Heart left ventricle (tissue), 16 donors: ENCODE measurements at regions of chr12 and their contacts with region 1.

Region 1: GRCh38 chr12:38332814-38333213 is 16.2 kb downstream of the ALG10B start:
- DNase-seq: no peak
- ATAC-seq: no peak
- H3K4me3 ChIP-seq: no peak overlapping the region
- H3K27ac ChIP-seq: no peak overlapping the region
- H3K4me1 ChIP-seq: no peaks in the 10 kb centered on the region
- H3K27me3 ChIP-seq: no peaks in the 10 kb centered on the region
- CTCF ChIP-seq: no peak
- POLR2A ChIP-seq: no peak

Region 2: DNA sequence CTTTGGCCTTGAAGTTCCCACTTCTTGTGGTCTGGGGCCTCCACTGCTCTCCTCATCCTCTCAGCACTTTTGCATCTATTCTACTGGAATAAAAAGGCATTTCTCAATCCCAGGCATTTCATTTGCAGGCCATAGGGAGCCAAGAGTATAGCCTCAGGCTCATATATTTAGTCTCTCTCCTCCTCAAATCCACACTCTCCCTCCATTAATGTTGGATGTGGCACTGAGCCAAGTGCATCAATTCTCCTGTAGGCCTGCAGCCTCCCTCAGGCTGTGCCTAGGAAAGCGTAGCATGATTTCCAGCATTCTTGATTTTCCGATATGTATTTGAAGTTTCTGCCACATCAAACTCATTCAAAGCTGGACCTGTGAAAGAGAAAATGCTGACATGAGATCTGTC is 784.1 kb after region 1 on chr12:
- intact Hi-C with region 1: loop called in 1 of 10 experiments (anchors 10 kb)
- DNase-seq: no peak
- ATAC-seq: no peak
- H3K4me3 ChIP-seq: no peak overlapping the region
- H3K27ac ChIP-seq: no peak overlapping the region
- H3K4me1 ChIP-seq: no peaks in the 10 kb centered on the region
- H3K27me3 ChIP-seq: no peaks in the 10 kb centered on the region
- CTCF ChIP-seq: no peak
- POLR2A ChIP-seq: no peak